SK-N-SH (cell line): ENCODE measurements at regions of chr11 and their contacts with region 1.

Region 1: GRCh38 chr11:44315947-44316658 is 6.2 kb upstream of the ALX4 start:
- DNase-seq: peak; percentile 82
- H3K4me3 ChIP-seq: peak overlapping the region; percentile 39 to 41
- H3K27ac ChIP-seq: no peak overlapping the region
- H3K4me1 ChIP-seq: peaks cover 10 to 15% of the 10 kb centered on the region in 2 experiments; a peak in 2 of 4 replicates
- H3K27me3 ChIP-seq: peaks cover 99% of the 10 kb centered on the region
- CTCF ChIP-seq: peak; percentile 22; the same call in 1 of the 2 replicates
- EP300 ChIP-seq: no peak
- RAD21 ChIP-seq: no peak

Region 2: GRCh38 chr11:44116234-44116830 is 199.8 kb before region 1 on chr11:
- CTCF ChIA-PET with region 1: no interaction called
- POLR2A ChIA-PET with region 1: no interaction called
- DNase-seq: no peak
- H3K4me3 ChIP-seq: no peak overlapping the region
- H3K27ac ChIP-seq: no peak overlapping the region
- H3K4me1 ChIP-seq: peaks cover 12% of the 10 kb centered on the region in 2 experiments; a peak in 3 of 4 replicates
- H3K27me3 ChIP-seq: no peaks in the 10 kb centered on the region
- CTCF ChIP-seq: no peak
- EP300 ChIP-seq: no peak
- RAD21 ChIP-seq: no peak

Region 3: DNA sequence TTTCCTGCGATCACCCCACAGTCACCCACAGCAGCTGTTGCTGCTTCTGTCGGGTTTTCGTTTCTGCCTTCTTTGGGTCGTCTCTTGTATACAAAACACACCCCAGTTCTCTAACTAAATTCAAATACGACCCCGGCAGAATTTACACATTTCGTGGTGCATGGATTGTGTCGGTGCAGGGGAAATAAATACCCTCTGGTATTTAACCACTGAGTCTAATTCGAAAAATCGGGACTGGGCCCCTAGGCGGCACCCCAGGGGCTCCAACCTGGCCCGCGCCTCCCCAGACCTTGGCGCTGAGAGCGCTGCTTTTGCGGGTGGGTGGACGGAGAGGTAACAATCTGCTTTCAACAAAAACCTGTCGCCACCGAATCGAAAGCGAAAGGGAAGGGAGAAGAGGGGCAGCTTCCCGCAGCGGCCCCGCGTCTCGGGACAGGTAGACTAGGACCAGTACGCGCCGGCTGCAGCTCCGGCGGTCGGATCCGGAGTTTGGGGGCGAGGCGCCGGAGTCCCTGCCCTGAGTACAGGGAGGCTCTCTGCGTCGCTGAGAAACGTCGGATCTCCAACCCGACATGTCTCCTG is 10.5 kb before region 1 on chr11:
- CTCF ChIA-PET with region 1: interaction called, 11 read pairs
- POLR2A ChIA-PET with region 1: no interaction called
- DNase-seq: peak; percentile 62
- H3K4me3 ChIP-seq: peak overlapping the region; percentile 45 to 59
- H3K27ac ChIP-seq: no peak overlapping the region
- H3K4me1 ChIP-seq: peaks cover 0 to 8% of the 10 kb centered on the region in 2 experiments; a peak in 2 of 4 replicates
- H3K27me3 ChIP-seq: peaks cover 67% of the 10 kb centered on the region
- CTCF ChIP-seq: peak; percentile 5; the same call in 1 of the 2 replicates
- EP300 ChIP-seq: no peak
- RAD21 ChIP-seq: no peak

Region 4: GRCh38 chr11:44344423-44344820 is 28.3 kb after region 1 on chr11:
- CTCF ChIA-PET with region 1: no interaction called
- POLR2A ChIA-PET with region 1: no interaction called
- DNase-seq: no peak
- H3K4me3 ChIP-seq: no peak overlapping the region
- H3K27ac ChIP-seq: no peak overlapping the region
- H3K4me1 ChIP-seq: peaks cover 0 to 6% of the 10 kb centered on the region in 2 experiments; a peak in 1 of 4 replicates
- H3K27me3 ChIP-seq: no peaks in the 10 kb centered on the region; the same call in 1 of the 2 replicates
- CTCF ChIP-seq: no peak
- EP300 ChIP-seq: no peak
- RAD21 ChIP-seq: no peak

Region 5: GRCh38 chr11:44409558-44410236 is 93.6 kb after region 1 on chr11:
- CTCF ChIA-PET with region 1: no interaction called
- POLR2A ChIA-PET with region 1: no interaction called
- DNase-seq: no peak
- H3K4me3 ChIP-seq: no peak overlapping the region
- H3K27ac ChIP-seq: no peak overlapping the region
- H3K4me1 ChIP-seq: peaks cover 0 to 5% of the 10 kb centered on the region in 2 experiments; a peak in 1 of 4 replicates
- H3K27me3 ChIP-seq: peaks cover 3% of the 10 kb centered on the region; the same call in 1 of the 2 replicates
- CTCF ChIP-seq: no peak
- EP300 ChIP-seq: no peak
- RAD21 ChIP-seq: no peak